IMR-90 (cell line): ENCODE measurements at regions of chr2 and their contacts with region 1.

Region 1: GRCh38 chr2:163191372-163191771 is 352.8 kb upstream of the KCNH7 start:
- DNase-seq: peak; percentile 50
- ATAC-seq: peak; percentile 46; the same call in 1 of the 2 replicates
- H3K4me3 ChIP-seq: no peak overlapping the region
- H3K27ac ChIP-seq: no peak overlapping the region
- H3K4me1 ChIP-seq: no peaks in the 10 kb centered on the region
- H3K27me3 ChIP-seq: no peaks in the 10 kb centered on the region
- CTCF ChIP-seq: peak; percentile 67
- POLR2A ChIP-seq: no peak
- RAD21 ChIP-seq: peak; percentile 73

Region 2: GRCh38 chr2:162509288-162509935 is 682.0 kb before region 1 on chr2:
- CTCF ChIA-PET with region 1: no interaction called
- POLR2A ChIA-PET with region 1: no interaction called
- dilution Hi-C with region 1: no loop called
- in situ Hi-C with region 1: no loop called
- intact Hi-C with region 1: no loop called
- DNase-seq: no peak
- ATAC-seq: no peak
- H3K4me3 ChIP-seq: no peak overlapping the region
- H3K27ac ChIP-seq: no peak overlapping the region
- H3K4me1 ChIP-seq: no peaks in the 10 kb centered on the region
- H3K27me3 ChIP-seq: no peaks in the 10 kb centered on the region
- CTCF ChIP-seq: no peak
- POLR2A ChIP-seq: no peak
- RAD21 ChIP-seq: no peak

Region 3: GRCh38 chr2:163465440-163465839 is 274.1 kb after region 1 on chr2:
- CTCF ChIA-PET with region 1: no interaction called
- POLR2A ChIA-PET with region 1: no interaction called
- dilution Hi-C with region 1: no loop called
- in situ Hi-C with region 1: no loop called
- intact Hi-C with region 1: loop called (anchors 10 kb)
- DNase-seq: peak; percentile 2
- ATAC-seq: peak; percentile 65
- H3K4me3 ChIP-seq: no peak overlapping the region
- H3K27ac ChIP-seq: no peak overlapping the region
- H3K4me1 ChIP-seq: no peaks in the 10 kb centered on the region
- H3K27me3 ChIP-seq: no peaks in the 10 kb centered on the region; the same call in 1 of the 2 replicates
- CTCF ChIP-seq: no peak
- POLR2A ChIP-seq: no peak
- RAD21 ChIP-seq: no peak

Region 4: GRCh38 chr2:163601377-163601776 is 410.0 kb after region 1 on chr2:
- CTCF ChIA-PET with region 1: no interaction called
- POLR2A ChIA-PET with region 1: no interaction called
- dilution Hi-C with region 1: no loop called
- in situ Hi-C with region 1: no loop called
- intact Hi-C with region 1: no loop called
- DNase-seq: peak; percentile 24
- ATAC-seq: no peak
- H3K4me3 ChIP-seq: no peak overlapping the region
- H3K27ac ChIP-seq: no peak overlapping the region
- H3K4me1 ChIP-seq: peaks cover 3% of the 10 kb centered on the region
- H3K27me3 ChIP-seq: no peaks in the 10 kb centered on the region
- CTCF ChIP-seq: no peak
- POLR2A ChIP-seq: no peak
- RAD21 ChIP-seq: no peak

Region 5: GRCh38 chr2:163878531-163879117 is 687.3 kb after region 1 on chr2:
- CTCF ChIA-PET with region 1: no interaction called
- POLR2A ChIA-PET with region 1: no interaction called
- dilution Hi-C with region 1: no loop called
- in situ Hi-C with region 1: no loop called
- intact Hi-C with region 1: loop called (anchors 2 kb)
- DNase-seq: peak; percentile 9
- ATAC-seq: peak; percentile 54; the same call in 1 of the 2 replicates
- H3K4me3 ChIP-seq: no peak overlapping the region
- H3K27ac ChIP-seq: no peak overlapping the region
- H3K4me1 ChIP-seq: no peaks in the 10 kb centered on the region
- H3K27me3 ChIP-seq: no peaks in the 10 kb centered on the region
- CTCF ChIP-seq: peak; percentile 54
- POLR2A ChIP-seq: no peak
- RAD21 ChIP-seq: peak; percentile 64

Region 6: GRCh38 chr2:164430166-164430783 is 1238.9 kb after region 1 on chr2:
- CTCF ChIA-PET with region 1: no interaction called
- POLR2A ChIA-PET with region 1: no interaction called
- dilution Hi-C with region 1: no loop called
- in situ Hi-C with region 1: no loop called
- intact Hi-C with region 1: loop called (anchors 5 kb)
- DNase-seq: peak; percentile 38
- ATAC-seq: 0 out of 2 replicates have a peak, but pooled peaks have one; percentile 63
- H3K4me3 ChIP-seq: no peak overlapping the region
- H3K27ac ChIP-seq: no peak overlapping the region
- H3K4me1 ChIP-seq: no peaks in the 10 kb centered on the region
- H3K27me3 ChIP-seq: no peaks in the 10 kb centered on the region
- CTCF ChIP-seq: peak; percentile 67
- POLR2A ChIP-seq: no peak
- RAD21 ChIP-seq: peak; percentile 66

Region 7: DNA sequence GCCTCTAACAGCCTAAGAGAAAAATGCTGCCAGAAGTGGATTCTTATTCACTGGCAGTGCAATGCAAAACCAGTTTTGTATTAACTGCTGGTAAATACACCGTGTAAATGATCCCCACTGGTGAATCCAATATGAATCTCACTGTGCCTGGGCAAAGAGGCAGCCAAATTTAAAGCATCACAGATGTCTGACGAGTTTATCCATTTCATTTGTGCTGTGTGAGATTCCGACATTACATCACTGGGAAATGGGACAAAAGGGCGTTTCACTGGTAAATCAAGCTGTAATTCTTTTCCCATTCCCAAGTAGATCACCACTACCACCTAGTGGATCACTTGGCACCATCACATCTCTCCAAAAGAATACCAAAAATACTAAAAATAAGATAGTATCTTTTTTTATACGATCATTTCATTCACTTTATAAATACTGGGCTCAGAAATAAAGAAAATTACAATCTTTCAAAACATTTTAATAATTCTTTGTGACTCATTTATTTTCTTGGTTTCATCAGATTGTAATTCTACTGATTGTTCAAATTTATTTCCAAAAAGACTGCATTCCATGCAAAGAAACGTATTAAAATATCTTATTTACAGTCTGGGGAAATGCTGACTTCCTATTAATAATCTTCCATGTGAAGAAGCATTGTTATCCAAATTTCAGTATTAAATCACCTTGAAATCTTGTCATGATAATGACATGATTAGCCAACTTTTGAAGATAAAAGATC is 1304.3 kb after region 1 on chr2:
- CTCF ChIA-PET with region 1: no interaction called
- POLR2A ChIA-PET with region 1: no interaction called
- dilution Hi-C with region 1: no loop called
- in situ Hi-C with region 1: loop called (anchors 25 kb)
- intact Hi-C with region 1: loop called (anchors 5 kb)
- DNase-seq: peak; percentile 43
- ATAC-seq: peak; percentile 48; the same call in 1 of the 2 replicates
- H3K4me3 ChIP-seq: no peak overlapping the region
- H3K27ac ChIP-seq: no peak overlapping the region
- H3K4me1 ChIP-seq: no peaks in the 10 kb centered on the region
- H3K27me3 ChIP-seq: no peaks in the 10 kb centered on the region
- CTCF ChIP-seq: peak; percentile 60
- POLR2A ChIP-seq: no peak
- RAD21 ChIP-seq: peak; percentile 65